ENCODE measurements at regions of chr13 and their contacts with region 1.

Region 1: GRCh38 chr13:44437356-44438233 is 64.0 kb downstream of the SERP2 start:
- DNase-seq: no peak
- H3K4me3 ChIP-seq: no peak overlapping the region
- CTCF ChIP-seq: no peak
- POLR2A ChIP-seq: no peak

Region 2: GRCh38 chr13:43433691-43434141 is 1003.9 kb before region 1 on chr13:
- intact Hi-C with region 1: no loop called
- DNase-seq: no peak
- H3K4me3 ChIP-seq: no peak overlapping the region
- CTCF ChIP-seq: no peak
- POLR2A ChIP-seq: no peak

Region 3: GRCh38 chr13:43905435-43906031 is 532.1 kb before region 1 on chr13:
- intact Hi-C with region 1: loop called (anchors 2 kb)
- DNase-seq: peak in 1 of 2 donors; percentile 43
- H3K4me3 ChIP-seq: no peak overlapping the region
- CTCF ChIP-seq: peak in 1 of 3 donors; percentile 86
- POLR2A ChIP-seq: no peak

Region 4: DNA sequence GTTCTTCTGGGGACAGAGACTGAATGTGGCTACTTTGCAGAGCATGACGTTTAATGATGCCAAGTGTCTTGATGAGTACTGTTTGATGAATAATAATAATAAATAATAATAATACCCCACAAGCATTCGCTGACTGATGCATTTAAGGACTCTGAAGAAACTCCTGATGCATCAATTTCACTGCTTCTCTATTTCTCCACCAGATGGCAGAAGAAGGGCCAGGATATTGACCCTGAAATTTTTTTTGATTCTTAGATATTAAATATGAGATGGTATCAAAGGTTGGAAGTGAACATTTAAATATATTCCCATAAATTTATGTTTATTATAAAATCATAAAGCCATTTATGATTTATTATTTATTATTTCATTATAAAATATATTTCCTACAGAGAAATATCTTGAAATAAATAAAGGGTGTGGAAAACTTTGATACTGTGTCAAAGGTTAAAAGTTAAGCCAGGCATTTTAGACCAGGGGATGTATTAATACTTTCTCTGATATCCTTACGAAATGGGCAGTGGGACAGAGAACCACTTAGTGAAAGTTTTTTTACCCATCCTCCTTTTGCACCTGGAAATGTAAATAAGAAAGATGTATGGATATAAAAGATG is 387.0 kb before region 1 on chr13:
- intact Hi-C with region 1: loop called (anchors 5 kb)
- DNase-seq: no peak
- H3K4me3 ChIP-seq: no peak overlapping the region
- CTCF ChIP-seq: no peak
- POLR2A ChIP-seq: no peak

Region 5: DNA sequence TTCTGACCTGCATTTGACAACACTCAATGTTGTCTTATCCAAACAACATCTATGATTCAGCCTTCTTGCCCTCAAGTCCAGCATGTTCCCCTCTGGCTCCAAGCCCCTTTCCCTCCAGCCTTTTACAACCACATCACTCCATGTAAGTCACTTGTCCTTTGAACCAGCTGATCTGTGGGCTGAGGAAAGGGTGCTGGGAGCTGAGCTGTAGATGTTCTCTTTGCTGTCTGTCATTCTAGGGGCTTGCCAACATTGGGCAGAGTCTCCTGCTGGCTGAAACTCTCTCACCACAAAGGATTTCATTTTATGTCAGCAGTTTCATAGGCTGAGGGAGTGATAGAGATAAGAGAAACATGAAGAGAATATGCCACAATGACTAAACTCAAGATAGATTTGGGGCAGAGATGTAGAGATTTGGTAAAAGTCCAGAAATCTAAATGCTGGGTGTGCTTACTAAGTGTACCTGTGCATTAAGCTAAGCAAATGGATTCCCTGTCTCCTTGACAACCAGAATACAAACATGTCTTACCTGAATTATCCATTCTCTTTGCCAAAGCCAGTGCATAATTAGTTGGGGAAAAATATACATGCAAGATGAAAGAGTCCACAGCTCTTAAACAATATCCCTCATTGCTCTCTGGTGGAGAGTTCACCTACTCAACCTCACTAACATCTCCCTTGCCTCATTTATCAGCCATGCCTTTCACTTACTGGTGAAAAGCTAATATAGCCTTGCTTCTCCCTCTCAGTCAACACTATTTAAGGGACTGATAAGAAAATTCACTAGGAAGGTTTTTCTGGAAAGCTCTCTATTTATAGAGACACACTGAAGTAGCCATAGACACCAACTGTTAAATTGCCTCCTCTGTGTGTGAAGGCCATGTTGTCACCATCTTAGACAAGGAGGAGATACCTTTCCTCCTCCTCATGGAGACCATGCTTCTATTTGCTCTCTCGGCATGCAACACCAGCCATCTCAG is 239.5 kb before region 1 on chr13:
- intact Hi-C with region 1: no loop called
- DNase-seq: no peak
- H3K4me3 ChIP-seq: no peak overlapping the region
- CTCF ChIP-seq: no peak
- POLR2A ChIP-seq: no peak

Region 6: GRCh38 chr13:44826591-44827350 is 389.2 kb after region 1 on chr13:
- intact Hi-C with region 1: no loop called
- DNase-seq: no peak
- H3K4me3 ChIP-seq: no peak overlapping the region
- CTCF ChIP-seq: no peak
- POLR2A ChIP-seq: no peak